ENCODE measurements at regions of chr16 and their contacts with region 1.

Region 1: GRCh38 chr16:84593825-84594724 is 23.8 kb downstream of the COTL1 start:
- DNase-seq: peak; percentile 70 to 94
- ATAC-seq: peak; percentile 86 to 94 (median 92)
- H3K4me3 ChIP-seq: peak overlapping the region; percentile 35
- H3K4me3 Mint-ChIP-seq: peak overlapping the region; percentile 74
- H3K27ac ChIP-seq: peak overlapping the region; percentile 91
- H3K27ac Mint-ChIP-seq: peak overlapping the region; percentile 83 to 88
- H3K4me1 ChIP-seq: peaks cover 70% of the 10 kb centered on the region
- H3K4me1 Mint-ChIP-seq: peaks cover 34 to 44% of the 10 kb centered on the region in 2 donors
- H3K27me3 ChIP-seq: no peaks in the 10 kb centered on the region
- H3K27me3 Mint-ChIP-seq: peaks cover 12 to 13% of the 10 kb centered on the region in 2 donors
- CTCF ChIP-seq: no peak

Region 2: GRCh38 chr16:84518748-84519341 is 75.2 kb before region 1 on chr16:
- intact Hi-C with region 1: loop called (anchors 1 kb)
- DNase-seq: peak; percentile 55 to 87
- ATAC-seq: peak; percentile 75 to 83 (median 83)
- H3K4me3 ChIP-seq: no peak overlapping the region
- H3K4me3 Mint-ChIP-seq: peak overlapping the region; percentile 45
- H3K27ac ChIP-seq: peak overlapping the region; percentile 43
- H3K27ac Mint-ChIP-seq: peak overlapping the region in 1 of 2 donors; percentile 36
- H3K4me1 ChIP-seq: peaks cover 56% of the 10 kb centered on the region
- H3K4me1 Mint-ChIP-seq: peaks cover 29 to 56% of the 10 kb centered on the region in 2 donors
- H3K27me3 ChIP-seq: no peaks in the 10 kb centered on the region
- H3K27me3 Mint-ChIP-seq: peaks cover 0 to 3% of the 10 kb centered on the region in 2 donors
- CTCF ChIP-seq: no peak

Measured in natural killer cell (primary cell).